Pancreas (tissue), 10 donors: ENCODE measurements at regions of chr17 and their contacts with region 1.

Region 1: DNA sequence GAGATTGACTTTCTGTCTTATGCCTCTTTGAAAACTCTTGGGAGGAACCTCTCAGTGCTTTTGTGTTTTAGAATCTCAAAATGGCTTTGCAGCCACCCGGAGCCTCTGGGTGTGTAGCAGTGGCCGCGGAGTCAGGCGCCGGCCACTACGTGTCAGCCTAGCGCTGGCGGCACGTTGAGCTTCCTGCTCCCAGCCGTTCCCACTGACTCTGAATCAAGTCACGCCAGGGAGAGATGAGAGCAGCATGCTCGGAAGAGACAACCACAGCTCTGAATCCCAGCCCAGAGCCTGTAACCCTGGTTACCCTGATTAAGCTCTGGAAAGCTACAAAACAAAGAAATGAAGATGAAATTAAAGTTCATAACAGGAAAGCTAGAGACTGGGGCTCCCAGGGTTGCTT is 97.4 kb upstream of the CACNG5 start:
- DNase-seq: peak in 1 of 6 donors; percentile 52
- ATAC-seq: peak in 3 of 4 donors; percentile 82 to 96 (median 85)
- H3K4me3 ChIP-seq: no peak overlapping the region
- H3K27ac ChIP-seq: no peak overlapping the region
- H3K4me1 ChIP-seq: no peaks in the 10 kb centered on the region
- H3K27me3 ChIP-seq: no peaks in the 10 kb centered on the region
- CTCF ChIP-seq: no peak

Region 2: GRCh38 chr17:66777689-66778225 is 40.2 kb after region 1 on chr17:
- intact Hi-C with region 1: no loop called
- DNase-seq: no peak
- ATAC-seq: no peak
- H3K4me3 ChIP-seq: no peak overlapping the region
- H3K27ac ChIP-seq: no peak overlapping the region
- H3K4me1 ChIP-seq: peaks cover 0 to 4% (median 2%) of the 10 kb centered on the region in 3 donors
- H3K27me3 ChIP-seq: no peaks in the 10 kb centered on the region
- CTCF ChIP-seq: no peak

Region 3: DNA sequence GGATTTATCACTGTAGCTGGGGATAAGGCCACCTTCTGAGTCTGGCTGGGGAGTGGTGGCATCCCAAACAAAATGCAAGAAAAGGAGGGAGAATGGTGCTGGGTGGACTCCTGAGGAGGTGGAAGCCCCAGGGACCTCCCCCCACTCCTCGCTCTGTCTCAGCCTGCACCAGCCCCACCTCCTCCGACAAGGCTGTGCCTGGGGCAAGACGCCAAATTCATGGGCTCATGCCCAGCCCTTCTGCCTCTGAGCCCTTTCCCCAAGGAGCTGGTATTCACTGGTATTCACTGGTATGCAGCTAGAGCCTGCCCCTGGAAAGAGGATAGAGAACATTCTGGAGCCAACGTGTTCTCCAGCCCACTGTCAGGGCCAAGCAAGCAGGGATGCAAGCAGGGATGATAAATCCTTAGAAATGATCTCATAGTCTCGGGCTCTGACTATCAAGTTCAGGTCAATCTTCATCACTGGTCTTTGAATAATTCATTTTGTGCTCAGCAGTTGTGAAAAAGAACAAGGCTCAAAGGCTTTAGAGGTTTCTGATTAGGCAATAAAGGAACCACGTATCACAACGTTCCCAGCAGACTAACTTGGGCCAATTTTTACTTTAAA is 154.6 kb after region 1 on chr17:
- intact Hi-C with region 1: loop called in 1 of 3 experiments (anchors 10 kb)
- DNase-seq: no peak
- ATAC-seq: no peak
- H3K4me3 ChIP-seq: no peak overlapping the region
- H3K27ac ChIP-seq: no peak overlapping the region
- H3K4me1 ChIP-seq: no peaks in the 10 kb centered on the region
- H3K27me3 ChIP-seq: no peaks in the 10 kb centered on the region
- CTCF ChIP-seq: no peak